ENCODE measurements at regions of chr12 and their contacts with region 1.

Region 1: DNA sequence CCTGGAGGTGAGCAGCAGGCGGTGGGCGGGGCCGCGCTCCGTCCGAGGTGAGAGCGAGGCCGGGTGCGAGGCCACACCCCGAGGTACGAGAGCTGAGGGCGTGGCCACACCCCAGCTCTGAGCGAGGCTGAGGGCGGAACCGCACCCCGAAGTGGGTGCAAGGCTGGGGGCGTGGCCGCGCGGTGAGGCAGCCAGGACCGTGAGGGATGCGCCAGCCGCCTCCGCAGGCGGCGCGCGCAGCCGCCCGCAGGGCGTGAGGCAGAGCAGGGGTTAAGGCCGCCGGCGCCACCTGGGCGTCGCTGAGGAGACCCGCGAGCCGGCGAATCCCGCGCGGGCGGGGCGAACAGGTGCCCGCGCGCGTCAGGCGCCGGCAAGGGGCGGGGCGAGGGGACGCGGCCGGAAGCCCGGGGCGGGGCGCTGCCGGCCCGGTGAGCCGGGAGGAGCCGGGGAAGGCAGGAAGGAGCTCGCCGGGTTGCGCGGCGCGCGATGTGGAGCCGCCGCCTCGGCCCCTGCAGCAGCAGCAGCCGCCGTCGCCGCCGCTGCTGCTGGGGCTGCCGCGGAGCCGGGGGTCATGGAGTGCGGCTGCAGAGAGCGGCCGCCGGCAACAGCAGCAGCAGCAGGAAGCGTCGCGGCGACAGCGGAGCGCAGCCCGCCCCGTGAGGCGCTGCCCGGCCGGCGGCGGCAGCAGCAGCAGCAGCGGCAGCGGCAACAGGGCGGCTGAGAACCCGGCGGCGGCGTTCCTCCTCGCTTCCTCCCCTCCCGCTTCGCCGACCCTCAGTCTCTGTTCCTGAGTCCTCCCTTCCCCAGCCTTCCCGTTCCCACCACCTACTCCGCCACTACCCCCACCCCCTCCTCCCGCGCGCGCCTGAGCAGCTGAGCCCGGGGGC is at the start of gene BICDL1:
- DNase-seq: peak; percentile 93
- H3K4me3 Mint-ChIP-seq: peak within 1 kb of the TSS; percentile 75
- H3K27ac Mint-ChIP-seq: peak within 1 kb of the TSS; percentile 72
- H3K4me1 Mint-ChIP-seq: peaks cover 13% of the 10 kb centered on the region
- H3K27me3 Mint-ChIP-seq: peaks cover 2% of the 10 kb centered on the region
- CTCF ChIP-seq: no peak
- total RNA-seq, gene BICDL1: 18.4 and 20.7 TPM in 2 replicates

Region 2: GRCh38 chr12:120041386-120042231 is 52.6 kb after region 1 on chr12:
- CTCF ChIA-PET with region 1: interaction called, 3 read pairs
- POLR2A ChIA-PET with region 1: interaction called, 27 read pairs
- intact Hi-C with region 1: no loop called
- DNase-seq: peak; percentile 35
- H3K4me3 Mint-ChIP-seq: no peak overlapping the region
- H3K27ac Mint-ChIP-seq: peak overlapping the region; percentile 82
- H3K4me1 Mint-ChIP-seq: peaks cover 21% of the 10 kb centered on the region
- H3K27me3 Mint-ChIP-seq: no peaks in the 10 kb centered on the region
- CTCF ChIP-seq: no peak

Region 3: DNA sequence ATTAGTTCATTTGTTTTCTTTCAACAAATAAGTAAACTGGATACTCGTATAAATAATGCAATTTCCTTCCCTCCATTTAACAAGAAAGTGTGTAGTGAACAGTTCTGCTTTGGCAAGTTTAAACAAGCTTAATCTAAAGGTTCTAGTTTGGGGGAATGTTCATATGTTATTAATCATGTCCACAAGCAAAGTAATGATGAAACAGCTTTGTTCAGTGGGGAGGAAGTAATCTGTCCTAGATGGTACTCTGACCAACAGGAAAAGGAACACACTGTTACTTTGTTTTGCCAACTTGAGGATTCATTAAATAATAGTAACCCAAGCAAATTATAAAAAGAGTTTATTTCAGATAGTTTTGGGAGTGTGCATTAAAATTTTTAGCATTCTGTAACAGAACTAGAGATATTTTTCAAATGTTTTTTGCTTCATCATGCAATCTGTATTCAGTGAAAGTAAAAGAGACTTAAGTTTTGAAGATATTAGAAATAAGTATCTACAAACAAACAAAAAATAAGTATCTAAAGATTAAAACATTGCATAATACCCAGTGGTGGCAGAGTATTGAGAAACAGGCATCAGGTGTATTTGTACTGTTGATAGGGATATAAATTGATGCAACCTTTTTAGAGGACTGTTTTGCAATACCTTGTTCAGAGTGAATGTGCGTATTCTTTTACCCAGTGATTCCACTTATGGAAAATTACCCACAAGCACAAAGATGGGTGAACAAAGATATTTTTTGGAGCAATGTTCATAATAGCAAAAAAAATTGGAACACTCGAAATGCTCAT is 66.4 kb after region 1 on chr12:
- CTCF ChIA-PET with region 1: interaction called, 4 read pairs
- POLR2A ChIA-PET with region 1: interaction called, 47 read pairs
- intact Hi-C with region 1: loop called (anchors 2 kb)
- DNase-seq: peak; percentile 80
- H3K4me3 Mint-ChIP-seq: peak overlapping the region; percentile 30
- H3K27ac Mint-ChIP-seq: peak overlapping the region; percentile 88
- H3K4me1 Mint-ChIP-seq: peaks cover 17% of the 10 kb centered on the region
- H3K27me3 Mint-ChIP-seq: no peaks in the 10 kb centered on the region
- CTCF ChIP-seq: no peak

Region 4: GRCh38 chr12:120079411-120080026 is 90.5 kb after region 1 on chr12:
- CTCF ChIA-PET with region 1: interaction called, 5 read pairs
- POLR2A ChIA-PET with region 1: interaction called, 30 read pairs
- intact Hi-C with region 1: no loop called
- DNase-seq: peak; percentile 43
- H3K4me3 Mint-ChIP-seq: no peak overlapping the region
- H3K27ac Mint-ChIP-seq: peak overlapping the region; percentile 6
- H3K4me1 Mint-ChIP-seq: peaks cover 15% of the 10 kb centered on the region
- H3K27me3 Mint-ChIP-seq: no peaks in the 10 kb centered on the region
- CTCF ChIP-seq: no peak

Region 5: DNA sequence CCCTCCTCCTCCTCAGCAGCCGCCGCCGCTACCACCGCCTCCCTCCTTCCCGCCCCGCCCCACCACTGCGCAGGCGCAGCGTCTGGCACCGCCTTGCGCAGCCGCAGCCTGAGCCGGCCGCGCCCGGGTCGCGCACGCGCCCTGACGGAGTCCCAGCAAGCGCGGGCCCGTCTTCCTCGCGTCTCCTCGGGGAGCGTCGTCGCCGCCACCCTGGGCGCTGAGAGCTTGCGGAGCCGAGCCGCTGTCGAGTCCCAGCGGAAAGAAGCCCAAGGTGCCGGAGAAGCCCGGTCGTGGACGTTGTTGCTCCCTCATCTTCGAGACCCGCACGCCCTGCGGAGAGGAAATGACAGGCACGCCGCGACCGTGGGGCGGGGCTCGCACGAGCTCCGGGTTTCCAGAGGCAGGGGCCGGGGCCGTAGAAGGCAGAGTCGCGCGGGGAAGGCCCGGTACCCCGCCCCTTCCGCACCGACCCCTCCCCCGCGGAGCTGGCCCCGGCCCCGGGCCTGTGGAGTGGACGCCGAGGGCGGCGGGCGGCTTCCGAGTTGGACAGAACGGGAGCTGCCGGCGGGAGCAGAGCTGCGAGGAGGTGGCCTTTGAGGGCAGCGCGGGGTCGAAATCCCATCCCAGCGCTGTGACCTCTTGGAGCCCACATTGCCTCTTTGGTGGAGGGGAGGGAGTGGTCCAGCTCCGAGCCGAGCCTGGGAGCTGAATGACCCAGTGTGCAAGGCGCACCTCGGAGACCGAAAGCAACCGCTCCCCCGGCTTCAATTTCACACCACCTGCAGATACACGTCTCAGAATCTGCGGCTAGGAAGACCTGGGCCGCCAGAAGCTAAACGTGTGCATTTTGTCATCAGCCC is 128.0 kb after region 1 on chr12:
- CTCF ChIA-PET with region 1: interaction called, 3 read pairs
- POLR2A ChIA-PET with region 1: interaction called, 60 read pairs
- intact Hi-C with region 1: loop called (anchors 1 kb)
- DNase-seq: peak; percentile 92
- H3K4me3 Mint-ChIP-seq: peak overlapping the region; percentile 83
- H3K27ac Mint-ChIP-seq: peak overlapping the region; percentile 95
- H3K4me1 Mint-ChIP-seq: peaks cover 44% of the 10 kb centered on the region
- H3K27me3 Mint-ChIP-seq: no peaks in the 10 kb centered on the region
- CTCF ChIP-seq: no peak

Measured in MCF 10A (cell line).